ENCODE measurements at regions of chr9 and their contacts with region 1.

Region 1: GRCh38 chr9:130940693-130941576 is 1.9 kb upstream of the FIBCD1 start:
- DNase-seq: peak; percentile 87 to 89
- H3K4me3 ChIP-seq: no peak overlapping the region
- H3K27ac ChIP-seq: no peak overlapping the region
- H3K4me1 ChIP-seq: peaks cover 9 to 28% of the 10 kb centered on the region in 2 donors
- H3K27me3 ChIP-seq: peaks cover 9% of the 10 kb centered on the region
- CTCF ChIP-seq: peak; percentile 77 to 96 (median 85)
- POLR2A ChIP-seq: no peak

Region 2: DNA sequence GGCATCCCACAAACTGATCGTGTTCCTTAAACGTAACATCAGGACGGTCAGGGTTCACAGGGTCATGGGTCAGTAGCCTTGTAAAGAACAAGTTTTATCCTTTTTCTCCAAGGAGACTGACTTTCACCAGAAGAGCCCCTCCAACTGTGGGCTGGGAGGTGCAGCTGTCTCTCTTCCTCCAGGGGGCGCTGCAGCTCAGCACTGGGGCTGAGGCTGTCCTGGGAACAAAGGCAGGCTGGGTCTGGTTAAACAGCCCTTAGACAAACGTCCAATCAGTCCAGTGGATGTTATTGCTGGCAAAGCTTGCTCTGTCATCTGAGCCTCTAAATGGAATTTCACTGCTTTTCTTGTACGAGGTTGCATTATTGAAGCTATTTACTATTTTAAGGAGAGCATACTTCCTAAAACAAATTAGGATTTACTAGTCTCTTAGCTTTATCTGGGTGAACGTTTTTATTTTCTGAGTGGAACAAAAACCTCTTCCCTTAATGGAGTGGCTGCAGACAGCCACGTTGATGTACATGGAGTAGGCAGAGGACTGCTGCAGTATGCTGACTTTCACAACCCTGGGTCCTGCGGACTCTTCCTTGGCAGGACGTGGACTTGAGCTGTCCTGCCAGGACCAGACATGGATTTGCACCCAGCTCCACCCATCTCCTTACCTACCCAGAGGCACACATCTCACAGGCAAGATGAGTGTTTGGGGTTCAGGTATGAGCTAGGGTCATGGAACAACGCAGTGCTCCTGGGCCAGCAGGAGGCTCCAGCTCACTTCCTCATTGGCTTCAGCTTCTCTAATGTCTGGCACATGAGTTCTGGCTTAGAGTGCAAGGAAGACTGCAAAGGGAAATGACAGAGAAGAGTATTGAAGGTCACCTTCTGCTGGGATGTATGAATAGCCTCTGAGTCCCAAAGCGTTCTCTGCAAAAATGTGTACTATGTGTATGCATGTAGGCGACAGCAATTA is 239.6 kb before region 1 on chr9:
- intact Hi-C with region 1: loop called (anchors 2 kb)
- DNase-seq: peak; percentile 82 to 88
- H3K4me3 ChIP-seq: no peak overlapping the region
- H3K27ac ChIP-seq: peak overlapping the region in 1 of 3 donors; percentile 47
- H3K4me1 ChIP-seq: peaks cover 0 to 7% of the 10 kb centered on the region in 2 donors
- H3K27me3 ChIP-seq: no peaks in the 10 kb centered on the region
- CTCF ChIP-seq: peak; percentile 78 to 95 (median 90)
- POLR2A ChIP-seq: no peak

Region 3: DNA sequence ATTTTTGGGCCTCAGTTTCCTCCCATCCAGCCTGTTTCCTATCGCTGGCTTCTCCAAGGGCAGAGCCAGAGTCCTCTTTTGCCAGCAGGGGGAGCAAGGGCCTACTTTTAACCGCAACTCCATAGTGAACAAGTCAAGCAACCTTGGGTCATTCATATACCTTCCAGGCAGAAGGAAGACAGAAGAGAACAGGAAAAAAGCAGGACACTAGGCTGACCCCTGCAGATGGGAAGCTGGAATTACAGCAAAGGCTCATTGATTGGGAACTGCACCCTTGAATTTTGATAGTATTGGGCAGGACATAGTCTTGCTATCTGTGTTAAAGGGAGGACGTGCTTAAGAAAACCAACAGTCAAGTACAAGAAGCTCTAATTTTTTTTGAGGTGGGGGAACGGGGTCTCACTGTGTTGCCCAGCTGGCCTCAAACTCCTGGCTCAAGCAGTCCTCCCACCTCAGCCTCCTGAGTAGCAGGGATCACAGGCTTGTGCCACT is 74.4 kb before region 1 on chr9:
- intact Hi-C with region 1: loop called (anchors 5 kb)
- DNase-seq: peak; percentile 68 to 72
- H3K4me3 ChIP-seq: no peak overlapping the region
- H3K27ac ChIP-seq: no peak overlapping the region
- H3K4me1 ChIP-seq: peaks cover 24 to 43% of the 10 kb centered on the region in 2 donors
- H3K27me3 ChIP-seq: no peaks in the 10 kb centered on the region
- CTCF ChIP-seq: peak; percentile 52 to 75 (median 68)
- POLR2A ChIP-seq: no peak